Naive thymus-derived CD4-positive, alpha-beta T cell (primary cell): ENCODE measurements at regions of chr1 and their contacts with region 1.

Region 1: GRCh38 chr1:205255941-205256780 is 28.4 kb downstream of the TMCC2 start:
- DNase-seq: peak; percentile 67 to 88 (median 79)
- ATAC-seq: peak; percentile 96
- H3K4me3 ChIP-seq: no peak overlapping the region
- H3K4me3 Mint-ChIP-seq: no peak overlapping the region
- H3K27ac ChIP-seq: no peak overlapping the region
- H3K27ac Mint-ChIP-seq: no peak overlapping the region
- H3K4me1 ChIP-seq: no peaks in the 10 kb centered on the region
- H3K4me1 Mint-ChIP-seq: peaks cover 0 to 7% (median 0%) of the 10 kb centered on the region in 7 donors
- H3K27me3 ChIP-seq: no peaks in the 10 kb centered on the region
- H3K27me3 Mint-ChIP-seq: no peaks in the 10 kb centered on the region

Region 2: DNA sequence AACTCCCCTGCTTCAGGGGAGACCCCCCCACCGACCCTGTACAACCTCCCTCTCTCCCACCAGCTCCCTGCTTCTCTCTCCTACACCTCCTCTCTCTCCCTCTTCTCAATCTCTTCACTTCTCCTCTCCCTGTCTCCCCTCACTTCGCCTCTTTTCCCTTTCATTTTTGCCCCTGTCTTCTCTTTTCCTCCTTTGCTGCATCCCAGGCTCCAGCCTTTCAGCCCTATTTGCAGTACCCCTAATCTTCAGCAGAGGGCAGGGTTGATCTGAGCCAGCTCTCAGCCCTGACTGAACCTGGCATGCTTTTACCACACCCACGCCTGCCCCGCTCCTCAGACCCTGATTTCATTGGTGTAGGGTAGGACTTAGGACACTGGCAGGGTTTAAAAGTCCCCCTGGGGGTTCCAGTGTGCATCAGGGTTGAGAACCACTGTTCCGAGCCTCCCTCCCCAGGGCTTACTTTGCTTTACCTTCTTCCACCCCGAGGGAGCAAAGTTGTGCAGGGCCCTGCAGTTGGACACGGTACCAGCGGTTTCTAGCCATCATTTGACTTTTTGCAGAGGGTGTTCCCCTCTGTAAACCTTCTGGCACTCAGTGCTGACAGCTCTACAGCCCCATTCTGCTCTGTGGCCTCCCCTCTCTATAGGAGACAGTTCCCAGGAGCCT is 280.5 kb before region 1 on chr1:
- CTCF ChIA-PET with region 1: interaction called, 20 read pairs
- POLR2A ChIA-PET with region 1: no interaction called
- intact Hi-C with region 1: loop called in 1 of 2 experiments (anchors 1 kb)
- DNase-seq: peak; percentile 14 to 60 (median 40)
- ATAC-seq: peak; percentile 71
- H3K4me3 ChIP-seq: no peak overlapping the region
- H3K4me3 Mint-ChIP-seq: no peak overlapping the region
- H3K27ac ChIP-seq: no peak overlapping the region
- H3K27ac Mint-ChIP-seq: no peak overlapping the region
- H3K4me1 ChIP-seq: no peaks in the 10 kb centered on the region
- H3K4me1 Mint-ChIP-seq: peaks cover 0 to 2% (median 0%) of the 10 kb centered on the region in 7 donors
- H3K27me3 ChIP-seq: no peaks in the 10 kb centered on the region
- H3K27me3 Mint-ChIP-seq: peaks cover 0 to 32% (median 20%) of the 10 kb centered on the region in 5 donors

Region 3: DNA sequence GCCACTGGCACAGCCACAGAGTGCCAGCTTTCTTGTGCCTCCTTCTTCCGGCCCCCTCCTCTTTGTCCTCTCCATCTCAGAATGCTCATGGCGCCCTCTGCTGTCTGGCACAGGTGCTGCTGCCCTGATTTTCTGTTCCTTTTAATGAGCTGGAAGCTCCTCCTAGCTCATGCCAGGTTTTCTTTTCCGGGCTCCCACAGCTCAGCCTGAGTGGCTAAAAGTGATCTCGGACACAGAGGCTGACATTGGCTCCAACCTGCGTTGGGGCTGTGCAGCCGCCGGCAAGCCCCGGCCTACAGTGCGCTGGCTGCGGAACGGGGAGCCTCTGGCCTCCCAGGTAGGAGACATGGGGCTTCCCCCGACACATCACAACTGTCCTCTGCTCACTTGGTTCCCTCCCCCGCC is 194.5 kb before region 1 on chr1:
- CTCF ChIA-PET with region 1: no interaction called
- POLR2A ChIA-PET with region 1: no interaction called
- intact Hi-C with region 1: loop called (anchors 1 kb)
- DNase-seq: peak; percentile 58 to 79 (median 72)
- ATAC-seq: peak; percentile 83
- H3K4me3 ChIP-seq: no peak overlapping the region
- H3K4me3 Mint-ChIP-seq: no peak overlapping the region
- H3K27ac ChIP-seq: no peak overlapping the region
- H3K27ac Mint-ChIP-seq: no peak overlapping the region
- H3K4me1 ChIP-seq: no peaks in the 10 kb centered on the region
- H3K4me1 Mint-ChIP-seq: peaks cover 0 to 4% (median 0%) of the 10 kb centered on the region in 7 donors
- H3K27me3 ChIP-seq: no peaks in the 10 kb centered on the region
- H3K27me3 Mint-ChIP-seq: no peaks in the 10 kb centered on the region

Region 4: DNA sequence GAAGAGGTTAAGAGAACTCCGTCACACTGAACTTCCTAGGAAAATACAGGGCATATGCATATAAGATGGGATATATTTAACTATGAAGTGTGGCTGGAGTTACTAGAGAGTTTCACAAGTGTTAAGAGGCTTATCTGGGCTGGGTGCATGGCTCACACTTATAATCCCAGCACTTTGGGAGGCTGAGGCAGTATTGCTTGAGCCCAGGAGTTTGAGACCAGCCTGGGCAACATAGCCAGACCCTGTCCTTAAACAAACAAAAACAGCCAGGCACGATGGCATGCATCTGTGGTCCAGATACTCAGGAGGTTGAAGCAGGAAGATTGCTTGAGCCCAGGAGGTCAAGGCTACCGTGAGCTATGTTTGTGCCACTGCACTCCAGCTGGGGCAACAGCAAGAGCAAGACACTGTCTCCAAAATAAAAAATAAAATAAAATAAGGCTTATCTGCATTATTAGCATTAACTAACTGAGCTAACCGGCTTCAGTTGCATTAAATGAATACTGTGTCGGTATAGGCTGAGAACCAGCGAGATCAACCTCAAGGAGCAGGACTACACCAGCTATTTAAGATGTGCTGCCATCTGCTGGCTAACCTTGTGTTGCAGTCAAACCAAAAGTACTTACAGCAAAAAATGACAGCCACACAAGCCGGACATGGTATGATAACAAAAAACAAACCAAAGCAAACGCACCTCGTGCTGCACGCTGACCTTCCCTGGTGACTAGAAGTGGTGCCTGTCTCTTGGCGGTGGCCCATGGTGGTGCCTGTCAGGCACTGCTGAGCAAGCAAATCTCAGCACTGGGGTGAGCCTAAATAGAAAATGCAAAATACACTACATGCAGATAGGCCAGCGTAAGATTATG is 114.7 kb before region 1 on chr1:
- CTCF ChIA-PET with region 1: interaction called, 7 read pairs
- POLR2A ChIA-PET with region 1: interaction called, 3 read pairs
- intact Hi-C with region 1: loop called (anchors 1 to 5 kb)
- DNase-seq: peak; percentile 37 to 75 (median 64)
- ATAC-seq: peak; percentile 94
- H3K4me3 ChIP-seq: no peak overlapping the region
- H3K4me3 Mint-ChIP-seq: peak overlapping the region in 4 of 10 donors; percentile 20 to 52 (median 33)
- H3K27ac ChIP-seq: no peak overlapping the region
- H3K27ac Mint-ChIP-seq: peak overlapping the region in 5 of 9 donors; percentile 9 to 51 (median 38)
- H3K4me1 ChIP-seq: no peaks in the 10 kb centered on the region
- H3K4me1 Mint-ChIP-seq: peaks cover 2 to 11% (median 8%) of the 10 kb centered on the region in 7 donors
- H3K27me3 ChIP-seq: no peaks in the 10 kb centered on the region
- H3K27me3 Mint-ChIP-seq: no peaks in the 10 kb centered on the region

Region 5: DNA sequence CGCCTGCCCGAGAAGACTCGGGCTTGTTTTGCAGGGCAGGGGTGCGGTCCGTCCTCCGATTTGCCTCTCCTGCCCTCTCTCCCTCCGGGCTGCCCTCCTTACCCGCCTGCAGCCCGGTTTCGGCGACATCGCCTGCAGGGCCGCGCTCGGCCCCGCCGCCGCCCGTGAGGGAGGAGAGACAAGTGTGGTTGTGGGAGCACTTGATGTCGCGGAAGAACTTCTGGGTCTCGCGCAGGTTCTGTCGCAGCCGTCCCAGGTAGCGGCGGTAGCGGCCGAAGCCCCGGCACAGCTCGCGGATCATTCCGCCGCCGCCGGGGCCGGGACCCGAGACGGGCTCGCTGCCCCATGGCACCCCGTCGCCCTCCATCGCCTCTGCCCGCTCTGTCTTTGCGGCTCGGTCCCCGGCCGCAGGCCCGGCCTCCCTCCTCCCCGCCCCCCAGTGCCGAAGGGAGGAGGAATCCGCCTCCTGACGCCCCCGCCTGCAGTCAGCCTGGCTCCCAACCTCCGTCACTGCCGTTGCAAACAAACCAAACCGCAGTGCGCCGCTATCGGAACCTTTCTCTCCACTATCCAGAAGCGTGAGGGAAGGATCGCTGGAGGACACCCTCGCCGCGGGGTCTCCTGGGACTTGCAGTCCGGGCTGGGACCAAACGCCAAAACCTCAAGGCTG is 44.9 kb before region 1 on chr1 and contains the start of gene DSTYK:
- CTCF ChIA-PET with region 1: no interaction called
- POLR2A ChIA-PET with region 1: no interaction called
- intact Hi-C with region 1: loop called in 1 of 2 experiments (anchors 1 kb)
- DNase-seq: peak; percentile 77 to 95 (median 93)
- ATAC-seq: peak; percentile 95
- H3K4me3 ChIP-seq: peak within 1 kb of the TSS; percentile 75
- H3K4me3 Mint-ChIP-seq: peak within 1 kb of the TSS; percentile 89 to 98 (median 96)
- H3K27ac ChIP-seq: peak within 1 kb of the TSS; percentile 87
- H3K27ac Mint-ChIP-seq: peak within 1 kb of the TSS; percentile 95 to 99 (median 98)
- H3K4me1 ChIP-seq: peaks cover 8% of the 10 kb centered on the region in 2 donors
- H3K4me1 Mint-ChIP-seq: peaks cover 12 to 66% (median 54%) of the 10 kb centered on the region in 7 donors
- H3K27me3 ChIP-seq: no peaks in the 10 kb centered on the region
- H3K27me3 Mint-ChIP-seq: peaks cover 0 to 4% (median 0%) of the 10 kb centered on the region in 5 donors
- total RNA-seq, gene DSTYK: 11.3 to 18.5 (median 15.2) TPM

Region 6: DNA sequence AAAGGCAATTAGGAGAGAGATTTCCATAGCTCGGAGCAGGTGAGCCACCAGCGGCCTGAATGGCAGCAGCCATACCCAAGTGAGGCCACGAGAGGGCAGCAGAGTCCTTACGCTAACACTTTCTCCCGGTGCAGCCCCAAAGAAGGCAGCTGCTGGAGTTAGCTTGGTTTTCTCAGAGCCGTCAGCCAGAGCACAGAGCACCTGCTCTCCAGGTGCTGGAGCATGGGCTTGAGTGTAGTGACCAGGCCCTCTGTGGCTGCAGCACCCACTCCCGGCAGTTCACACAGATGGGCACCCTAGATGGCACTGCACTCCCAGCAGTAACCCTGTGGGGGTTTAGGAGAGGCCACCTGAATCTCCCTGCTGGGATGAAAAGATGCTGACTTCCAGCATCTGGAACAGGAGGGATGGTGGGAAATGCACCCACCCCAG is 17.4 kb after region 1 on chr1:
- CTCF ChIA-PET with region 1: interaction called, 12 read pairs
- POLR2A ChIA-PET with region 1: no interaction called
- intact Hi-C with region 1: no loop called
- DNase-seq: peak; percentile 77 to 87 (median 80)
- ATAC-seq: peak; percentile 93
- H3K4me3 ChIP-seq: peak overlapping the region; percentile 35
- H3K4me3 Mint-ChIP-seq: peak overlapping the region in 9 of 10 donors; percentile 60 to 77 (median 73)
- H3K27ac ChIP-seq: no peak overlapping the region
- H3K27ac Mint-ChIP-seq: peak overlapping the region in 8 of 9 donors; percentile 70 to 93 (median 80)
- H3K4me1 ChIP-seq: peaks cover 22 to 42% of the 10 kb centered on the region in 2 donors
- H3K4me1 Mint-ChIP-seq: peaks cover 16 to 48% (median 36%) of the 10 kb centered on the region in 7 donors
- H3K27me3 ChIP-seq: no peaks in the 10 kb centered on the region
- H3K27me3 Mint-ChIP-seq: peaks cover 0 to under 1% (median 0%) of the 10 kb centered on the region in 5 donors